MCF 10A (cell line): ENCODE measurements at regions of chr10 and their contacts with region 1.

Region 1: GRCh38 chr10:122089311-122090017 is 100.5 kb downstream of the TACC2 start:
- DNase-seq: peak; percentile 52
- H3K4me3 Mint-ChIP-seq: no peak overlapping the region
- H3K27ac Mint-ChIP-seq: peak overlapping the region; percentile 51
- H3K4me1 Mint-ChIP-seq: peaks cover 19% of the 10 kb centered on the region
- H3K27me3 Mint-ChIP-seq: no peaks in the 10 kb centered on the region
- CTCF ChIP-seq: peak; percentile 14

Region 2: GRCh38 chr10:122072491-122072890 is 17.0 kb before region 1 on chr10:
- CTCF ChIA-PET with region 1: interaction called, 4 read pairs
- POLR2A ChIA-PET with region 1: interaction called, 18 read pairs
- intact Hi-C with region 1: no loop called
- DNase-seq: no peak
- H3K4me3 Mint-ChIP-seq: no peak overlapping the region
- H3K27ac Mint-ChIP-seq: no peak overlapping the region
- H3K4me1 Mint-ChIP-seq: peaks cover 8% of the 10 kb centered on the region
- H3K27me3 Mint-ChIP-seq: no peaks in the 10 kb centered on the region
- CTCF ChIP-seq: no peak

Region 3: DNA sequence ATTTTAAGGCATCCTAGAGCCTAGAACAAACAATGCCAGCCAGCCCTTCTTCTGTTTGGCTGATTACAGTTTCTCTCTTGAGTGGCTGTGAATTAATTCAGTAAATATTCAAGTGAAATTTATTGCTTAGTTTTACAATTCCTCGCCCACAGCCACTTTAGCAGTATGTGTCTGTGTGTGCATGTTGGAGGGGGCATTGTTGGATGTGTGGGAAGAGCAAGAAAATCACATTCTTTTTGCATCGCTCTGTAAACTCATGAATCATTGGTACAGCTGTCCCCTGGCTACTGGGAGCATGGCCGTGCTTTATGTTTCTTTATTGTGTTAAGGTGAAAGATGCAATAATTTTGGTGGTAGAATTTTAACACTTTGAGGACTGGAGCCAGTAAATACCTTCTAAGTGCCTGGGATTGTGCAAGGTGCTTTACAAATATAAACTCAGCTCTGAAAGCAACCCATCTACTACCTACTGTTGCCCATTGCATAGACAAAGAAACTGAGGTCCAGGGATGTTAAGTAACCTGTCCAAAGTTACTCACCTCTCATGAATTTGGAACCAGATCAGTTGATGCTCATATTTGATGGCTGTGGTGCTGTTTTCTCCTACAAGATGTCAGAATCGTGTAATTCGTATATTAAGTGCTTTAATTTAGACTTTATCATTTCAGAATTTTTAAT is 91.7 kb after region 1 on chr10:
- CTCF ChIA-PET with region 1: no interaction called
- POLR2A ChIA-PET with region 1: no interaction called
- intact Hi-C with region 1: no loop called
- DNase-seq: peak; percentile 24
- H3K4me3 Mint-ChIP-seq: no peak overlapping the region
- H3K27ac Mint-ChIP-seq: no peak overlapping the region
- H3K4me1 Mint-ChIP-seq: peaks cover 22% of the 10 kb centered on the region
- H3K27me3 Mint-ChIP-seq: no peaks in the 10 kb centered on the region
- CTCF ChIP-seq: no peak

Region 4: GRCh38 chr10:122307669-122308486 is 218.4 kb after region 1 on chr10:
- CTCF ChIA-PET with region 1: no interaction called
- POLR2A ChIA-PET with region 1: no interaction called
- intact Hi-C with region 1: no loop called
- DNase-seq: peak; percentile 98
- H3K4me3 Mint-ChIP-seq: peak overlapping the region; percentile 64
- H3K27ac Mint-ChIP-seq: peak overlapping the region; percentile 94
- H3K4me1 Mint-ChIP-seq: peaks cover 22% of the 10 kb centered on the region
- H3K27me3 Mint-ChIP-seq: no peaks in the 10 kb centered on the region
- CTCF ChIP-seq: no peak

Region 5: GRCh38 chr10:122446668-122447423 is 357.4 kb after region 1 on chr10:
- CTCF ChIA-PET with region 1: no interaction called
- POLR2A ChIA-PET with region 1: no interaction called
- intact Hi-C with region 1: no loop called
- DNase-seq: peak; percentile 53
- H3K4me3 Mint-ChIP-seq: no peak overlapping the region
- H3K27ac Mint-ChIP-seq: no peak overlapping the region
- H3K4me1 Mint-ChIP-seq: peaks cover 13% of the 10 kb centered on the region
- H3K27me3 Mint-ChIP-seq: no peaks in the 10 kb centered on the region
- CTCF ChIP-seq: no peak